ENCODE measurements at regions of chr15 and their contacts with region 1.

Region 1: DNA sequence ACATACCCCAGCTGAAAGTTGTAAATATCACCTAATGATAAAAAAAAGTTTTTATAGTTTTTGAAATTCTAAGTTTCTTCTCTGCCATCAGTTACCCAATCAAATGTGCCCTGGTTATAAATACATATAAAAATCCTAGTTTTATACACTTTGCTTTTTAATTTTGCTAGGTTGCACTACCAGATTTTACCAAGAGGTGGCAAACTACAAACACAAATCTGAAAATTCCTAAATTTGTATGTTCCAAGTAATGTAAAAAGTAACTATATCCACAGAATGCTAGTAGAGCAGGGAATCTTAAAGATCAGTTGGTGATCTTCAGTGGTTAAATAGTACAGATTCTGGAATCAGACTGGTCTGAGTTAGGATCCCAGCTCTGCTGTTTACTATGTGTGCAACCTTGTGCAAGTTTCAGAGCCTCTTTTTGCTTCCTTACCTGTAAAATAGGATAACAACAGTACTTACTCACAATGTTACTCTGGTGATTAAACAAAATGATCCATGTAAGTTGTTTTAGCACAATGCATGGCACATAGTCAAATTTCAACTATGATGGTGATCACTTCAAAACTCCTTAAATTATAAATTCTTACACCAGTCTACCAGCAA is 11.0 kb downstream of the TRPM7 start:
- DNase-seq: no peak

Region 2: GRCh38 chr15:50876989-50877360 is 201.3 kb after region 1 on chr15:
- intact Hi-C with region 1: loop called (anchors 1 kb)
- DNase-seq: peak in 8 of 10 donors; percentile 30 to 90 (median 71)